ENCODE measurements at regions of chr3 and their contacts with region 1.

Region 1: DNA sequence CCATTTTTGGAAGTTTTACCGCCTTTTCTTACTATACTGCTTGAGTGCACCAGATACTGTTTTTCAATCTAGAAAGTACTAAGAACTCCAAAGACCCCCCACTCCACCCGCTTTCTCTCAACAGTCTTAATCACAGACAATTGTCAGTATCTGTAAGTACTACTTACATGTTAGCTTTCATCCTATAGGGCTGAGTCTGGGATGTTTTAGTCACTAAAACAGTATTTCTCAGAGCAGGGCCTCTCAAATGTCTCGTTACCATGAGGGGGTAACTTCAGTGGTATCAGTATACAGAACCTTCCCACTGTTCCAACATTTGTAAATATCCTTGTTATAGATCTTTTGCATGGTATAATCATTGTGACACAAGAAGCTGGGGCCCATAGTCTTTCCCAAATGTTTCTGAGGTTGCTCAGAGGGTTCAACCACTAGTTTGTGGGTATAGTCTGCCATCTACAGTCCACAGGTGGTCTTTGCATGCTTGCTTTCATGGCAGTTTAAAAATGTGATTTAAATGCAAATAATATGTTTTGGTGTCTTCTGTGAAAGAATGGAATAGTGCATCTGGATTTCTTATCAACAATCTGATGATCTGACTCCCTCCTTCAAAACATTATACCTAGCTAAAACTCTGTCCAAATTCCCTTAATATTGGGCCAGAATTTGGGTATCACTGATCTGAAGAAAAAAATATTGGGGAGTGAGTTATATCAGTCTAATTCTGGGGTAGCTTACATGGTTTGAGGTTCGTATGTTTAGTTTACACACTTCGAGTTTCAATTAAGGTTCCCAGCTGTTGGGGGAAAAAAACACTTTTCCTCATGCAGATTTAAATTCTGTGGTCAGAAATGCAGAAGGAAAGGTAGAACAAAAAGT is 18.0 kb upstream of the DNAJC13 start:
- DNase-seq: peak in 2 of 10 donors; percentile 18 to 22

Region 2: GRCh38 chr3:131794766-131795388 is 604.4 kb before region 1 on chr3:
- intact Hi-C with region 1: loop called (anchors 5 kb)
- DNase-seq: peak in 3 of 10 donors; percentile 9 to 38 (median 16)

Region 3: GRCh38 chr3:131948806-131949205 is 450.5 kb before region 1 on chr3:
- intact Hi-C with region 1: no loop called
- DNase-seq: no peak

Region 4: GRCh38 chr3:132352541-132353143 is 46.6 kb before region 1 on chr3:
- intact Hi-C with region 1: loop called (anchors 1 kb)
- DNase-seq: peak in 4 of 10 donors; percentile 41 to 65 (median 58)